ENCODE measurements at regions of chr17 and their contacts with region 1.

Region 1: DNA sequence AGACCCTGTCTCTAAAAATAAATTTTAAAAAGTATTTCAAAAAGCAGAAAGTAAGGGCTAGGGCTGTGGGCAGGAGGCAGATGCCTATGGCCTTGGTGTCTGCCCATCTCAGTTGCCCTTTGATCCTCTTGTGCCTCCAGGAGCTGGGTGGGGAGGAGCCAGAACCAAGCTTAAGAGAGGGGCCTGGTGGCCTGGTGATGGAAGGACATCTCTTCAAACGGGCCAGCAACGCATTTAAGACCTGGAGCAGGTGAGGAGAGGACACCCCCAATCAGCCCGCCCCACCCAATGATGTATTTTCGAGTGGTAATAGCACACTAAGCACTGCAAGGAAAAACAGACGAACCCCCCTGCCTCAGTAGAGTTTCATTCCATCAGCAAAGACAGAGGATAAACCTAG is 7.6 kb upstream of the KCTD11 start:
- DNase-seq: no peak
- ATAC-seq: no peak
- H3K4me3 Mint-ChIP-seq: no peak overlapping the region
- H3K27ac Mint-ChIP-seq: no peak overlapping the region
- H3K4me1 Mint-ChIP-seq: peaks cover 4% of the 10 kb centered on the region
- H3K27me3 Mint-ChIP-seq: no peaks in the 10 kb centered on the region
- CTCF ChIP-seq: no peak

Region 2: GRCh38 chr17:7323731-7324437 is 20.5 kb before region 1 on chr17:
- CTCF ChIA-PET with region 1: interaction called, 19 read pairs
- POLR2A ChIA-PET with region 1: interaction called, 6 read pairs
- intact Hi-C with region 1: loop called (anchors 1 kb)
- DNase-seq: peak; percentile 62
- ATAC-seq: peak; percentile 41
- H3K4me3 Mint-ChIP-seq: no peak overlapping the region
- H3K27ac Mint-ChIP-seq: no peak overlapping the region
- H3K4me1 Mint-ChIP-seq: peaks cover 15% of the 10 kb centered on the region
- H3K27me3 Mint-ChIP-seq: no peaks in the 10 kb centered on the region
- CTCF ChIP-seq: peak; percentile 64

Region 3: GRCh38 chr17:7393613-7394451 is 49.4 kb after region 1 on chr17:
- CTCF ChIA-PET with region 1: no interaction called
- POLR2A ChIA-PET with region 1: no interaction called
- intact Hi-C with region 1: no loop called
- DNase-seq: no peak
- ATAC-seq: peak; percentile 68
- H3K4me3 Mint-ChIP-seq: peak overlapping the region; percentile 91
- H3K27ac Mint-ChIP-seq: peak overlapping the region; percentile 84
- H3K4me1 Mint-ChIP-seq: peaks cover 15% of the 10 kb centered on the region
- H3K27me3 Mint-ChIP-seq: no peaks in the 10 kb centered on the region
- CTCF ChIP-seq: no peak

Measured in activated B cell treated with CpG ODN at 0.5 μM for 24 hours (primary cell).